ENCODE measurements at regions of chr7 and their contacts with region 1.

Region 1: DNA sequence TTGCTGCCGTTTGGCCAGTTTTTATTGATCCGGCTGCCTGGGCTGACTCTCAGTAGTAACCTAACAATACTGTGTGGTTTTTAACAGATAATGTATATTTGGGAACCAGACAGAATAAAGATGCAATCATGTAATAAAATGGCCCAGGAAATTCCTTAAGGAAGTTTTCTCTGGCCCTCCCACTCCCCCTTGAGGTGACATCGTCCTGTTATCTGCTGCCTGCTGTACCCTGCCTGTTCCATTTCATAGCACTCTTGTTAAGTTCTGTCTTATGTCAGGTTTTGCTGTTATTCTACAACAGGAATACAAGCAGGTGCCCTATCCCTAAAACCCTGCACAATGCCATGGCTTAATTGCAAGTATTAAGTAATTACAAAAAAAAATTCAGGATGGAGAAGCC is 12.5 kb downstream of the ITGB8 start:
- DNase-seq: no peak
- H3K4me3 Mint-ChIP-seq: peak overlapping the region; percentile 38
- H3K27ac Mint-ChIP-seq: no peak overlapping the region
- H3K4me1 Mint-ChIP-seq: peaks cover 23% of the 10 kb centered on the region
- H3K27me3 Mint-ChIP-seq: no peaks in the 10 kb centered on the region
- CTCF ChIP-seq: no peak

Region 2: DNA sequence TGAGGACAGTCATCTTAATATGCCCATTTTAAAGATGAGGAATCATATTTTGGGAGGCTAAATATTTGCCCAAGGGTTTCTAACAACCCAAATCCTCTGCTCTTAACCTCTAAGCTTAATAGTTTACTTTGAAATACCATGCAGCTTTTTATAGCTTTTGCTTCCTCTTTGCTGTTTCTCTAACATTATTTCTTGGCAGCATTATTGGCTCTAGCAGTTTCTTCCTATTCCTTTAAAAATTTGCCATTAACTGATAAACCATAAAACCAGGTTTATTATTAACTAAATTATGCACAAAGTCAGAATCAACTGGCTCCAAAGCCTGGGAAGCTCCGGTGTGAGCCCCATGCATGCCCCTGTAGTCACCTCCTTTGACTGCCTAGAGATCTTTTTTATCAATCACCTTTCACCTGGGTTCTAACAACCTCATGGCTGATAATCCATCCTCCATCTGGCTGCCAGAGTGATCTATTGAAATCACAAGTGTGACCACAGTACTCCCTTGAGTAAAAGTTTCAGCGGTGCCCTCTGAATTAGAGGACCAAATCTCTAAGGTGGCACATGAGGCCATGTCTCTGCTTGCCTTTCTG is 49.9 kb after region 1 on chr7:
- CTCF ChIA-PET with region 1: no interaction called
- intact Hi-C with region 1: loop called (anchors 2 kb)
- DNase-seq: peak; percentile 39
- H3K4me3 Mint-ChIP-seq: peak overlapping the region; percentile 23
- H3K27ac Mint-ChIP-seq: peak overlapping the region; percentile 38
- H3K4me1 Mint-ChIP-seq: peaks cover 42% of the 10 kb centered on the region
- H3K27me3 Mint-ChIP-seq: no peaks in the 10 kb centered on the region
- CTCF ChIP-seq: no peak

Region 3: DNA sequence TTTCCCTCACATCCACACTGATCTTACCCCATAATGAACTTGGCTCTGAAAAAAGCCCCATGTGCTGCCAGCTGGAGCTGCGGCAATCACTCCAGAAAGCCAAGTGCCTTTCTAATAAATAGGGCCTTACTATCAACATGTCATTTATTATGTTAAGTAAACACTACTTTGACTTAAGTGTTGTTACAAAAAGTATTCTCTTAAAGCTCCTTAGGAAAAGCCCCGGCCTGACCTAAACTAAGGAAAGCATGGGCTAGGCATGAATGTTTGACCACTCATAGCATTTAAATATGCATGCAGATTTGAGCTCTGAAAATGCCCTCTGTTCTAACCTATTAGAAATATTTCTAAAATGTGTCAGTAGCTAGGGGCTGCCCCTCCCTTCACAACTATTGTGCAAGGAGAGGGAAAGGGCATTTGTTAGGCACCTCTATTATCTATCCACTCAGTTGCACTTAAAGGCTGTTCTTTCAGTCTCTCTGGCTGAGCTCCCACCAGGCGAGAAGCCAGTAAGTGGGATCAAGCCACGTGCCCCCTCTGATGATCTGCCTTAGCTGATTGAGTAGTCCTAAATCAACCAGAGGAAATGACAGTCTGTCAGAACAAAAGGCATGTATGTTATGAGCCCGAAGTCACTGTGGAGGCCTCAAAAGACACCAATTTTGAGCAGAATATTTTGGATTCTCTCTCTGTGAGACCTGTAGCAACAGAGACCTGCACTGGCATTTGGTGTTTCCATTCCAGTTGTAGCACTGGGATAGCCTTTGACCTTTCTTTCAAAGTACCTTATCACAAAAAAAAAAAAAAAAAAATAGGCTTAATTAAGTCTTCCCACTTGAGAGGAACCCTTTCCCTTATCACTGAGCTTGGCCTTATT is 64.6 kb after region 1 on chr7:
- CTCF ChIA-PET with region 1: interaction called, 4 read pairs
- intact Hi-C with region 1: loop called (anchors 5 kb)
- DNase-seq: peak; percentile 77
- H3K4me3 Mint-ChIP-seq: peak overlapping the region; percentile 22
- H3K27ac Mint-ChIP-seq: peak overlapping the region; percentile 83
- H3K4me1 Mint-ChIP-seq: peaks cover 52% of the 10 kb centered on the region
- H3K27me3 Mint-ChIP-seq: no peaks in the 10 kb centered on the region
- CTCF ChIP-seq: no peak

Region 4: DNA sequence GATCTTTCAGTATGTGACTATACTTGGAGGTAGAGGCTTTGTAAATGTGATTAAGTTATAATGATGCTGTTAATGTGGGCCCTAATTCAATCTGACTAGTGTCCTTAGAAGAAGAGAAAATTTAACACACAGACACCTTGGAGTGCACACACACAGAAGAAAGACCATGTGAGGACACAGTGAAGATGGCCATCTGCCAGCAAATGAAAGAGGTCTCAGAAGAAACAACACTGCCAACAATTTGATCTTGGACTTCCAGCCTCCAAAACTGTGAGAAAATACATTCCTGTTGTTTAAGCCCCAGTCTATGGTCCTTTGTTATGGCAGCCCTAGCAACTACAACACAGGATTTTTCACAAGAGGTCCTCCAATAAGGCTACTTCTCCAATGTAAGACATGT is 151.4 kb after region 1 on chr7:
- CTCF ChIA-PET with region 1: no interaction called
- intact Hi-C with region 1: no loop called
- DNase-seq: no peak
- H3K4me3 Mint-ChIP-seq: no peak overlapping the region
- H3K27ac Mint-ChIP-seq: no peak overlapping the region
- H3K4me1 Mint-ChIP-seq: peaks cover 12% of the 10 kb centered on the region
- H3K27me3 Mint-ChIP-seq: no peaks in the 10 kb centered on the region
- CTCF ChIP-seq: no peak

Measured in Calu3 (cell line).